Common myeloid progenitor, CD34-positive (primary cell): ENCODE measurements at regions of chr20 and their contacts with region 1.

Region 1: GRCh38 chr20:45044084-45044573 is 56.8 kb downstream of the KCNS1 start:
- DNase-seq: peak; percentile 74 to 86 (median 85)
- H3K4me3 ChIP-seq: no peak overlapping the region
- H3K27ac ChIP-seq: no peak overlapping the region
- H3K4me1 ChIP-seq: peaks cover 0 to 15% (median 7%) of the 10 kb centered on the region in 4 experiments
- H3K27me3 ChIP-seq: no peaks in the 10 kb centered on the region

Region 2: DNA sequence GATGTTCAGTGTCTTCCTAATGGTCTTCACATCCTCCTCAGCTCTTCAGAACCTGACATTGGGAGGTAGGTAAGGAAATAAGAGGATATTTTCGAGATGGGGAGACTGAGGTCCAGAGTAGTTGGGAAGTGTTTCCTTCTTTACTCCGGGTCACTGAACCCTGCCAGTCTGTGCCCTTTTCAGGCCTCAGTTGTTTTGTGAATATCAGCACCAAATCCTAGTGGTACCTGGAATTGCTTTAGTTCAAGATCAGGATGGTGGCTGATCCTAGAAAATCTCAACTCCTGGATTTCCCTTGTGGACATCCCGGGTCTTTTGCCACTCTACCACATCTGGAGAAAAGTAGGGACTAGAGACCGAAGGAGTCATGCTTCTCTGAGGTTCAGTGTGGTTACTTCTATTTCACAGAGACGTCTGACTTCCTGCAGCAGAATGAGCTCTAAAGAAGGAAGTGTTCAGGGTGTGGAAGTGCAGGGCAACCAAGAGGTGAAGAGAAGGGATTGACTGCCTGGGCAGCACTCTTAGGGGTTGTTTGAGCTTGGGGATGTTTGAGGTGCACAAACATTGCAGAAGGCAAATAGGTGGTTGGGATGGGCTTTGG is 76.8 kb before region 1 on chr20:
- CTCF ChIA-PET with region 1: no interaction called
- POLR2A ChIA-PET with region 1: no interaction called
- DNase-seq: peak; percentile 46 to 85 (median 79)
- H3K4me3 ChIP-seq: peak overlapping the region; percentile 74 to 98 (median 92)
- H3K27ac ChIP-seq: peak overlapping the region; percentile 73 to 88
- H3K4me1 ChIP-seq: peaks cover 48 to 67% (median 57%) of the 10 kb centered on the region in 4 experiments
- H3K27me3 ChIP-seq: no peaks in the 10 kb centered on the region

Region 3: DNA sequence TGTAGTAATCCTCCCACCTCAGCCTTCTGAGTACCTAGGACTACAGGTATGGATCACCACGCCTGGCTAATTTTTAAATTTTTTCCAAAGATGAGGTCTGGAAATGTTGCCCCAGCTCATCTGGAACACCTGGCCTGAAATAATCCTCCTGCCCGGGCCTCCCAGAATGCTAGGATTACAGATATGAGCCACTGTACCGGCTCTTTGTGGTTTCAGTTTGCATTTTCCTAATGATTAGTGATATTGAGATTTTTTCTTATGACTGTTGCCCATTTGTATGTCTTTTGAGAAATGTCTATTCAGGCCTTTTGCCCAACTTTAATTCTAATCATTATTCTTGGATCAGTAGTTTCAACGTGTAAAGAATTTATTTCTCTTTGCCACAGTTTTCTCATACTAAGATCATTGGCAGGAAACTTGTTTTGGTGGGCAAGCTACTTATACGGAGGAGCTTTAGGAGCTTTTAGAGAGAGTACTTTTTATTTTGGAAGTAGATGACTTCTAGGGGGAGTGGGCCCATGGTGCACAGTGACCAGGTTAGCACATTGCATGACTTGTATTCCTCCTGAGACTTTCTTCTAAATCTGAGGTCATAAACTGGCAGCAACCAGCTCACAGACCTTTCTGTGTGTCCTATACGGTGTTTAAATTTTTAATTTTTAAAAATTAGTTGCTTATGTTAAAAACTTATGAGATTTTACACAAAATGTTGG is 15.5 kb before region 1 on chr20:
- CTCF ChIA-PET with region 1: interaction called, 19 read pairs
- POLR2A ChIA-PET with region 1: no interaction called
- DNase-seq: no peak
- H3K4me3 ChIP-seq: no peak overlapping the region
- H3K27ac ChIP-seq: no peak overlapping the region
- H3K4me1 ChIP-seq: no peaks in the 10 kb centered on the region
- H3K27me3 ChIP-seq: no peaks in the 10 kb centered on the region

Region 4: GRCh38 chr20:45111799-45112471 is 67.8 kb after region 1 on chr20:
- CTCF ChIA-PET with region 1: interaction called, 25 read pairs
- POLR2A ChIA-PET with region 1: no interaction called
- DNase-seq: peak in 1 of 3 donors; percentile 29
- H3K4me3 ChIP-seq: no peak overlapping the region
- H3K27ac ChIP-seq: no peak overlapping the region
- H3K4me1 ChIP-seq: no peaks in the 10 kb centered on the region
- H3K27me3 ChIP-seq: peaks cover 0 to 34% (median 18%) of the 10 kb centered on the region in 5 experiments